ENCODE measurements at regions of chr1 and their contacts with region 1.

Region 1: DNA sequence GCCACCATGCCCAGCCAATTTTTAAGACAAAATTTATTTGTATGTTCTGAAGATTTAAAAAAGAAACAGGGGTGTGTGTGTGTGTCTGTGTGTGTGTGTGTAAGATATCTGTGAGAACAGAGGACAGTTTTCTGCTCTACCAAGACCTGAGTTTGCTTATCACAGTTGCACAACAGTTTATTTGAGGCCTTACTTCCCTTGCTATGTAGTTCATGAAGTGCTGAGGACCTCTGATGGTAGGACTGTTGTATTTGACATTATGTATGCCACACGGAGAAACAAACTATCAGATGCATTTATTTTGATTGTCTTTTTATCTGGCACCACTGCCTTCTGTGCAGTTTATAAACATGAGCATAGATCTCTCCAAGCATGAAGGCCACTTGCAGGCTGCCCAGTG is 355.2 kb downstream of the PBX1 start:
- DNase-seq: no peak
- ATAC-seq: peak; percentile 82 to 89
- H3K4me3 ChIP-seq: no peak overlapping the region
- H3K27ac ChIP-seq: no peak overlapping the region
- H3K4me1 ChIP-seq: no peaks in the 10 kb centered on the region
- H3K27me3 ChIP-seq: no peaks in the 10 kb centered on the region

Region 2: DNA sequence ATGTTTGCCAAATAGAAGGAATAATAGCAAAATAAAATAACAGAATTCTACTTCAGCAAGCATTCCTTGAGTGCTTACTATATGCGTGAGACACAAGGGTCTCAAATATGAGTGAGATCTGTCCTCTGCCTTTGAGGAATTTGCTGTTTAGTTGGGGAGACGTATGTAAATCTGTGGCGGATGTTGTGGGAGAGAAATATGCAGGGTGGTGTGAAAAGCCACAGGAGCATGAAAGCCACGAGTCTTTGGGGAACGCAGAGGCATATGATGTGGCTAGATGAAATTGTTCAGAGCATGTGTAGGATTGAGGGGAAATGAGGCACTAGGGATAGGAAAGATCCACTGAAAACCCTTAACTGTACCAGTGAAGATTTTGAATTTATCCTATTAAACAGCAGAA is 110.8 kb before region 1 on chr1:
- intact Hi-C with region 1: loop called in 1 of 4 experiments (anchors 10 kb)
- DNase-seq: no peak
- ATAC-seq: no peak
- H3K4me3 ChIP-seq: no peak overlapping the region
- H3K27ac ChIP-seq: no peak overlapping the region
- H3K4me1 ChIP-seq: peaks cover 5% of the 10 kb centered on the region
- H3K27me3 ChIP-seq: no peaks in the 10 kb centered on the region

Region 3: DNA sequence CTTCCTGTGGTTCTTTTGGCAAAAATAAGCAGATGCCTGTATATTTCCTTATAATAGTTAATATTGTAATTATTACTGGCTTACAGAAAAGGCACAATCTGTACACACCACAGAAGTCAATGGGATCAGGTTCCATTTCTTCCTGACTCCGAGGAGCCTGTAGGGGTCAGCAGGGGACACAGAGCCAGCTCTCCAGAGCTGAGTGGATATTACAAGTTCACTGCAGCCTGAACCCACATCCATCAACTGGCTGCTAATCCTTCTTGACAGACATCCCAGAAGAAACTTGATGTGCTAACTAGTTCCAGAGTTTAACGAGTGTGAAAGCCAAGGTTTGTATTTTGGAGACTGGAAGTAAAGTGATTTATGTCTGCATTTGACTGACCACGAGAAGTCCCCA is 238.5 kb after region 1 on chr1:
- intact Hi-C with region 1: no loop called
- DNase-seq: no peak
- ATAC-seq: no peak
- H3K4me3 ChIP-seq: no peak overlapping the region
- H3K27ac ChIP-seq: no peak overlapping the region
- H3K4me1 ChIP-seq: no peaks in the 10 kb centered on the region
- H3K27me3 ChIP-seq: no peaks in the 10 kb centered on the region

Measured in right cardiac atrium (tissue), 5 donors.